WTC11 (cell line): ENCODE measurements at regions of chr20 and their contacts with region 1.

Region 1: DNA sequence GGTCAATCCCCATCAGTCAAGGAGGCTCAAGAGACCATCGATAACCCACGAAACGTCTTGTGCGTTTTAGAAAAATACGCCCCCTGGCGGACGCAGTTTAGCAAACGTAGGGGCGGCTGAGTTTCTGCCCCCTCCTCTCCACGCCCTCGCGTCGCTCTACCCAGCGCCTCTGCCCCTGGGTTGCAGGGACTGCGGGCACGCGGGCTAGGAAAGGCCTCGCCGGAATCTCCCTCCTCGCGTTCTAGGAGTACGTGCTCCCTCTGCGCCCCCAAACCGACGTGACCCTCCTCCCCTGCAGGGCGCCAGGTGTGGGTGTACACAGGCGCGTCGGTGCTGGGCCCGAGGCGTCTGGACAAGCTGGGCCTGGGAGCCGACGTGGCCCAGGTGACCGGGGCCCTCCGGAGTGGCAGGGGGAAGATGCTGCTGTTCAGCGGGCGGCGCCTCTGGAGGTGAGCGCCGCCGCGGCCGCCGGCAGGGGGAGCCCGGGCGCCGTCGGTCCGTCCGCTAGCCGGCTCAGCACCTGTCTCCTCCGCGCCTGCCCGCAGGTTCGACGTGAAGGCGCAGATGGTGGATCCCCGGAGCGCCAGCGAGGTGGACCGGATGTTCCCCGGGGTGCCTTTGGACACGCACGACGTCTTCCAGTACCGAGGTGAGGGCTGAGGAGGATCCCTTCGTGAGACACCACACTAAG is 5.3 kb downstream of the MMP9 start:
- DNase-seq: peak; percentile 91
- ATAC-seq: peak; percentile 60
- H3K4me3 Mint-ChIP-seq: peak overlapping the region; percentile 65
- H3K27ac Mint-ChIP-seq: no peak overlapping the region; the same call in 1 of the 2 replicates
- H3K4me1 Mint-ChIP-seq: peaks cover 39% of the 10 kb centered on the region
- H3K27me3 Mint-ChIP-seq: peaks cover 31% of the 10 kb centered on the region
- CTCF ChIP-seq: peak; percentile 83

Region 2: GRCh38 chr20:45934586-45935415 is 79.2 kb before region 1 on chr20 and contains the start of gene PCIF1:
- CTCF ChIA-PET with region 1: interaction called, 21 read pairs
- POLR2A ChIA-PET with region 1: interaction called, 4 read pairs
- DNase-seq: peak; percentile 98
- ATAC-seq: peak; percentile 63
- H3K4me3 Mint-ChIP-seq: peak within 1 kb of the TSS; percentile 96
- H3K27ac Mint-ChIP-seq: peak within 1 kb of the TSS; percentile 100
- H3K4me1 Mint-ChIP-seq: peaks cover 39% of the 10 kb centered on the region
- H3K27me3 Mint-ChIP-seq: no peaks in the 10 kb centered on the region
- CTCF ChIP-seq: no peak
- total RNA-seq, gene PCIF1: 37.7 to 42.2 TPM (median 39.4 TPM) in 3 replicates

Region 3: GRCh38 chr20:45971675-45972499 is 42.1 kb before region 1 on chr20 and contains the start of gene ZNF335:
- CTCF ChIA-PET with region 1: interaction called, 83 read pairs
- POLR2A ChIA-PET with region 1: interaction called, 4 read pairs
- DNase-seq: peak; percentile 94
- ATAC-seq: peak; percentile 85
- H3K4me3 Mint-ChIP-seq: peak within 1 kb of the TSS; percentile 84
- H3K27ac Mint-ChIP-seq: peak within 1 kb of the TSS; percentile 98
- H3K4me1 Mint-ChIP-seq: peaks cover 14% of the 10 kb centered on the region
- H3K27me3 Mint-ChIP-seq: no peaks in the 10 kb centered on the region; the same call in 1 of the 2 replicates
- CTCF ChIP-seq: no peak
- total RNA-seq, gene ZNF335: 16.3 to 20.0 TPM (median 16.4 TPM) in 3 replicates

Region 4: DNA sequence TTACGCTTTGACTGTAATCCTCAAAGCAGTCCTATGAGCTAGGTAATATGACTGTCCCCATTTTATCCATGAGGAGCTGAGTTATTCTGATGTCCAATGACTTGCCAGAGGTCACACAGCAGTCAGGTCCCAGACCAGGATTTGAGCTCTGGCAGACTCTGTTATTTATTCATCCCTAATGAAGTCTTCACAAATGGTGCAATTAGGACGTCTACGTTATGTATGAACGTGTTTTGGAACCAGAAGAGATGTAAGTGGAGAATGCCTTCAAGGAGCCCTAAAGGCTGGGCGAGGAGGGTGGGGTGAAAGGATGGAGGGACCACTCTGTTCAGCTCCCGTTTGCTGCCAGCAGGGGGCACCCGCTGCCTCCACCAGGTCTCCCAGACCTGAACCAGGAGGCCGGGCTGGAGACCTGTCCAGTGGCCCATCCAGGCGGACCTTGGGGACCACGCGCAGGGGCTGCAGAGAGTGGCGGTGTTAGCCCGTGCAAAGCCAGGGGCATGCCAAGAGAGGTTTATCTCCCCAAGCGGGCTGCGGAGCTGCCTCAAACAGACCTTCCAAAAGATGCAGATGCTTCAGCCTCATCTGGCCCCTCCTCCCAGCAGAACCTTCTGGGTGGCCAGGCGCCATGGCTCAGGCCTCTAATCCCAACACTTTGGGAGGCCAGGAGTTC is 26.7 kb before region 1 on chr20:
- CTCF ChIA-PET with region 1: interaction called, 235 read pairs
- POLR2A ChIA-PET with region 1: interaction called, 10 read pairs
- DNase-seq: peak; percentile 93
- ATAC-seq: peak; percentile 91
- H3K4me3 Mint-ChIP-seq: no peak overlapping the region
- H3K27ac Mint-ChIP-seq: no peak overlapping the region
- H3K4me1 Mint-ChIP-seq: peaks cover 14% of the 10 kb centered on the region
- H3K27me3 Mint-ChIP-seq: peaks cover 6% of the 10 kb centered on the region
- CTCF ChIP-seq: peak; percentile 93

Region 5: DNA sequence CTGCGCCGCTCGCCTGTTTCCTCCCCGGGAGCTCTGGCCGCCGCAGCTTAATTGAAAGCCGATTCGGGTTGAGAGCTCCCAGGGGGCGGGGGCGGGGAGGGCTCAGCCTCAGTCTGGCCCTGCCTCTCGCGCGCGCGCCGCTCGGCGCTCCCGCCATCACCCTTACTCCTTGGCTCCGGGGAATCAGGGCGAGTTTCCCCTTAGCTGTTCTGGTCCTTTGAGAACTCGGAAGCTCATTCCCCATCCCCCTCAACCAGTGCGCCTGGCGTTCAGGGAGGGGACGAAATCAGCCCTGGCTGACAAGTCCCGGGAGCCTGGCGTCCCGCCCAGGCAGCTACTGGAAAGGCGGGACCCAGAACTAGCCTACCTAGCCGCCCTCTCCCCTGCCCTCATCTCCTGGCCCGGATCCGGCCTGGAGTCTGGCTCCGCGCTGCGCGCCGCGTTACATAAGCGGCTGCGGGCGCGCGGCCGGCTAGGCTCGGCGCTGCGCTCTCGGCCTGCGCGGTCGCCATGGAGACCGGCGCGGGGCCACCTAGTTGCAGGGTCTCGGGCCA is 17.8 kb after region 1 on chr20:
- CTCF ChIA-PET with region 1: interaction called, 29 read pairs
- POLR2A ChIA-PET with region 1: no interaction called
- DNase-seq: peak; percentile 71
- ATAC-seq: peak; percentile 75
- H3K4me3 Mint-ChIP-seq: peak overlapping the region; percentile 66
- H3K27ac Mint-ChIP-seq: no peak overlapping the region
- H3K4me1 Mint-ChIP-seq: peaks cover 2% of the 10 kb centered on the region; the same call in 1 of the 2 replicates
- H3K27me3 Mint-ChIP-seq: peaks cover 99% of the 10 kb centered on the region
- CTCF ChIP-seq: no peak

Region 6: GRCh38 chr20:46089417-46090388 is 75.7 kb after region 1 on chr20 and contains the start of gene NCOA5:
- CTCF ChIA-PET with region 1: interaction called, 14 read pairs
- POLR2A ChIA-PET with region 1: no interaction called
- DNase-seq: peak; percentile 96
- ATAC-seq: peak; percentile 84
- H3K4me3 Mint-ChIP-seq: peak within 1 kb of the TSS; percentile 89
- H3K27ac Mint-ChIP-seq: peak within 1 kb of the TSS; percentile 89
- H3K4me1 Mint-ChIP-seq: peaks cover 37% of the 10 kb centered on the region
- H3K27me3 Mint-ChIP-seq: no peaks in the 10 kb centered on the region
- CTCF ChIP-seq: no peak
- total RNA-seq, gene NCOA5: 16.5 to 20.5 TPM (median 16.5 TPM) in 3 replicates

Region 7: GRCh38 chr20:46099491-46100287 is 85.7 kb after region 1 on chr20:
- CTCF ChIA-PET with region 1: interaction called, 10 read pairs
- POLR2A ChIA-PET with region 1: no interaction called
- DNase-seq: peak; percentile 76
- ATAC-seq: peak; percentile 98
- H3K4me3 Mint-ChIP-seq: peak overlapping the region; percentile 37
- H3K27ac Mint-ChIP-seq: no peak overlapping the region
- H3K4me1 Mint-ChIP-seq: peaks cover 6% of the 10 kb centered on the region
- H3K27me3 Mint-ChIP-seq: peaks cover 52% of the 10 kb centered on the region
- CTCF ChIP-seq: no peak